Activated B cell treated with CpG ODN at 0.5 μM for 24 hours (primary cell): ENCODE measurements at regions of chr15 and their contacts with region 1.

Region 1: DNA sequence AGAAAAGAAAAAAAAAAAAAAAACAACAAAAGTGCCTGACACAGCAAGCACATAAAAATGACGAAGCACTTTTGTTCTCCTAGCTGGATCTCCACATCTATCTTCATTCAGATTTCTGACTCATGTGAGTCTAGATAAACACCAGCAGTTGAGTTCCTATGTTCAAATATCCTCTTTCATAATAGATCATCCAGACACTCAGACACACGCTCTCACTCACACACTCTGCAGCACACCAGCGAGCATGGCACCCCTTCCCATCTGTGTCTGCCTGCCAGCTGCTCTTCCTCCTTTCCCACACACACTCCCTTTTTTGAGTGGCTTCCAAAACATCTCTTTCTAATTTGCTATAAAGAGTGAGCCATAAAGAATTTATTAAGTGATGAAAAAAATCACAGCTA is 19.8 kb upstream of the CELF6 start:
- DNase-seq: no peak
- ATAC-seq: no peak
- H3K4me3 Mint-ChIP-seq: no peak overlapping the region
- H3K27ac Mint-ChIP-seq: no peak overlapping the region
- H3K4me1 Mint-ChIP-seq: no peaks in the 10 kb centered on the region
- H3K27me3 Mint-ChIP-seq: no peaks in the 10 kb centered on the region
- CTCF ChIP-seq: no peak

Region 2: GRCh38 chr15:72353265-72353664 is 13.5 kb after region 1 on chr15:
- CTCF ChIA-PET with region 1: no interaction called
- POLR2A ChIA-PET with region 1: no interaction called
- intact Hi-C with region 1: no loop called
- DNase-seq: no peak
- ATAC-seq: no peak
- H3K4me3 Mint-ChIP-seq: no peak overlapping the region
- H3K27ac Mint-ChIP-seq: no peak overlapping the region
- H3K4me1 Mint-ChIP-seq: peaks cover 5% of the 10 kb centered on the region
- H3K27me3 Mint-ChIP-seq: no peaks in the 10 kb centered on the region
- CTCF ChIP-seq: no peak

Region 3: GRCh38 chr15:72671535-72671934 is 331.8 kb after region 1 on chr15:
- CTCF ChIA-PET with region 1: no interaction called
- POLR2A ChIA-PET with region 1: no interaction called
- intact Hi-C with region 1: loop called (anchors 10 kb)
- DNase-seq: no peak
- ATAC-seq: no peak
- H3K4me3 Mint-ChIP-seq: no peak overlapping the region
- H3K27ac Mint-ChIP-seq: no peak overlapping the region
- H3K4me1 Mint-ChIP-seq: peaks cover 7% of the 10 kb centered on the region
- H3K27me3 Mint-ChIP-seq: peaks cover 4% of the 10 kb centered on the region
- CTCF ChIP-seq: no peak